Activated CD8-positive, alpha-beta memory T cell treated with anti-CD3 and anti-CD28 coated beads, Interleukin-2, amount 10 ng/mL, durations not matched to agents 7 days and 5 days (primary cell): ENCODE measurements at regions of chr7 and their contacts with region 1.

Region 1: GRCh38 chr7:50092579-50093491 is at the start of gene ZPBP:
- DNase-seq: peak; percentile 59
- ATAC-seq: peak; percentile 75
- H3K4me3 Mint-ChIP-seq: peak within 1 kb of the TSS; percentile 76
- H3K27ac Mint-ChIP-seq: peak within 1 kb of the TSS; percentile 72
- H3K4me1 Mint-ChIP-seq: peaks cover 8% of the 10 kb centered on the region
- H3K27me3 Mint-ChIP-seq: peaks cover 24% of the 10 kb centered on the region
- total RNA-seq, gene ZPBP: not detected

Region 2: DNA sequence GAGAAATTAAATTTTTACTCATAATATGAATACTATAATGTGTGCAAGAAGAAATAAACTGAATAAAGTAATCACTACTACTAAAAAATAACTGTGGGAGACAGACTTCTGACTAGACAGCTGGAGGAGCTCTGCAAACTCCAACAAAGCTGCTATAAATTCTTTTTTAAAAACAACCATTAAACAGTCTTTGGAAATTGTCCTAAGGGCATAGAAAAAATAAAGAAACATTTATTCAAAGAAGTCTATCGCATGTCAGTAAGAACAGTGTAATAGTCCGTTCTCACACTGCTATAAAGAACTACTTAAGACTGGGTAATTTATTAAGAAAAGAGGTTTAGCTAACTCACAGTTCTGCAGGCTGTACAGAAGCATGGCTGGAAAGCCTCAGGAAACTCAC is 55.7 kb before region 1 on chr7:
- CTCF ChIA-PET with region 1: no interaction called
- DNase-seq: no peak
- ATAC-seq: no peak
- H3K4me3 Mint-ChIP-seq: no peak overlapping the region
- H3K27ac Mint-ChIP-seq: no peak overlapping the region
- H3K4me1 Mint-ChIP-seq: no peaks in the 10 kb centered on the region
- H3K27me3 Mint-ChIP-seq: peaks cover 4% of the 10 kb centered on the region

Region 3: DNA sequence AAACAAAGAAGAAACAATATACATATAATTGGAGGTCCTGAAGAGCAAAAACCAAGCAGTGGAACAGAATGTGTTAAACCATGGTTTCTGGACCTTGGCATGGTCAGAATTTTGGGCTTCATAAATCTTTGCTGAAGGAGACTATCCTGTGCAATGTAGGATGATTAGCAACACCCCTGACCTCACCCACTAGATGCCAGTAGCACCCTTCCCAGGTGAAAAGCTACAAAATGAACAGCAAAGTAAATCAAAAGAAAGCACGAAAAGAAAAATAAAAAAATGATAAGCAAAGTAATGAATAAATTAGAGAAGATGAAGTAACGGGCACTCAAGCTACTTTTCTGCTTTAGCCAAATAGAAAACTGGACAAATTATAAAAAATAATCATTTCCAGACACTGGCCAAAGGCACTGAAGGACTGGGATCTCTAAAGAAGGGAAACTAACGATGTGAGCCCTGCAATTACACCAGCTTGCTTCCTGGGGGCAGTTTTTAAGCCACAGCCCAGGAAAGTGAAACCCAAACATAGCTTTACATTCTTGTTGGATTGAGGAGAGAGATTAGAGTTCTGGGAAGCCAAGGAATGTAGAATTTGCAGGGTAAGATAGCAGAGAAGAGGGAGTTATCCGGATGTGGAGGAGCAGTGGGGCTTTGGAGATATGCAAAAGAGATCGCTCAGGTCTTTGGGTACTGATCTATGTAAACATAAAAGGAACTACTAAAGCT is 19.6 kb after region 1 on chr7:
- CTCF ChIA-PET with region 1: interaction called, 15 read pairs
- DNase-seq: no peak
- ATAC-seq: no peak
- H3K4me3 Mint-ChIP-seq: no peak overlapping the region
- H3K27ac Mint-ChIP-seq: no peak overlapping the region
- H3K4me1 Mint-ChIP-seq: no peaks in the 10 kb centered on the region
- H3K27me3 Mint-ChIP-seq: peaks cover 48% of the 10 kb centered on the region